ENCODE measurements at regions of chr2 and their contacts with region 1.

Region 1: DNA sequence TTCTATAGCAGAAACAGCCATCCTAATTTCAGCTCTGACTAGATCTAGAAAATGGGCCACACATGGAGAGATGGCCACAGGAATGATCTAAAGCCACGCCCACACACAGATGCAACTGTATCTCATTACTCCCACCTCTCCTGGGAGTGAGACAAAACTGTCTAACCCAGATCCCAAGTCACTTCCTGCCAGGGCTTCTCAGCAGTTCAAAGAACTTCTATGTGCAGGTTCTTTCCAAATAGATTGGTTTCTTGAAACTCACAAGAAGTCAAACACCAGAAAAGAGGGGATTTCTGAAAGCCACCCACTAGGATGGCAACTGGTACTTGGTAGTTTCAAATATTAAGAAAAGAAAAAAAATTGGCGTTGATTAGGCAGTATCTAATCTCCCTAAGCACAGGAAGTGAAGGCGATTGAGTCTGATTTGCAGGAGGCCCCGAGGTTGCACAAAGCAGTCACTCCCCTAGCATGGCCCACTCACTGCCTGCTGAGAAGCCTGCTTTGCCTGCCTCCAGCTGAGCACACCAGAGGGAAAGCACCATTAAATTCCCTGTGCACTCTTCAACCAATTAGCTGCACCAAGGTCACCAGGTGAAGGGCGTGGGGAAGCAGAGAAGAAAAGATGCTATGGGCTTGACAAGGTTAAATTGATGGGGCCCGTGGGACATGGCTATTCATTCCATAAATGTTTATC is 51.1 kb downstream of the PAPOLG start:
- DNase-seq: no peak
- H3K4me3 Mint-ChIP-seq: peak overlapping the region; percentile 32
- H3K27ac Mint-ChIP-seq: peak overlapping the region; percentile 83
- H3K4me1 Mint-ChIP-seq: peaks cover 46% of the 10 kb centered on the region
- H3K27me3 Mint-ChIP-seq: no peaks in the 10 kb centered on the region

Region 2: DNA sequence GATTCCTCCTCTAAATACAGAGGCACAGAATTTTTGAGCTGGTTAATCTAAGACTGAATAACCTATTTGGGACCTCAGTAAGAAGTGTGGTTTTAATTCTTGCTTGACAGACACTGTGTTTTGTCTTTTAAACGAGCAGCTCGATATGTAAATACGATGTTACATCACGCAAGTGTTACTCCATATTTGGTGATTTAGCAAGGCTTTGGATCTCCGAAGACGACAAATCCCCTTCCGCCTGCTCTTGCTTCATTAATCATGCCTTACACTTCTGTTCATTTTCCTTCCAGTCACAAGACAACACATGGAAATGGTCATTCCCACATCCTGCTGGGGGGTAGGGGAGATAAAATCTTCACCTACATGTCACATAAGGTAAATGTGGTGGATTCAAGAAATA is 263.1 kb before region 1 on chr2:
- intact Hi-C with region 1: no loop called
- DNase-seq: no peak
- H3K4me3 Mint-ChIP-seq: no peak overlapping the region
- H3K27ac Mint-ChIP-seq: no peak overlapping the region
- H3K4me1 Mint-ChIP-seq: peaks cover 6% of the 10 kb centered on the region
- H3K27me3 Mint-ChIP-seq: peaks cover 68% of the 10 kb centered on the region

Region 3: GRCh38 chr2:60775048-60775639 is 32.0 kb before region 1 on chr2:
- intact Hi-C with region 1: no loop called
- DNase-seq: no peak
- H3K4me3 Mint-ChIP-seq: no peak overlapping the region
- H3K27ac Mint-ChIP-seq: no peak overlapping the region
- H3K4me1 Mint-ChIP-seq: peaks cover under 1% of the 10 kb centered on the region
- H3K27me3 Mint-ChIP-seq: no peaks in the 10 kb centered on the region

Region 4: DNA sequence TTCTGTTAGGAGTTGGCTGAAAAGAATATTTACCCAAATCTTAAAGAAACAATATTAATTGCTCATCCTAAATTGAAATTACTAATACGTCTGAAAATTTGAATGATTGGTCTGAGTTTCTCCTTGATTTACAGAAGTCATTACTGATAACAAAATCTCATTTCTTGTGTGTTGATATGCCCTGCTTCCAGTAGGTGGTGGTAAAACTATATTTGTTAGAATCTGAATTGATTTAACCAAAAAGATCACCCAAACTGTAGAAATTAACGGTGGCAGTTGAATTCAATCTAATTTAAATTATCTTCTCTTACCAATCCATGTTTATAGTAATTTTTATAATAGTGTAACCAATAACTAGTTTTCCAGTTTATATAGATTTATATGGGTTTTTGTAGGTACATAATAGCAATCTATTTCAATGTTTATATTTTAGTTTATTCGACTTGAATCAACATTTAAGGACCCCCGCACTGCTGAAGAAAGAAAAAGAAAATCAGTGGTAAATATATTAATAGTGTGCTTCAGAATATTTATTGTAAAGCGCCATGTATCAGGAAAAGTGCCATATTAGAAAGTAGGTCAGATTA is 12.8 kb before region 1 on chr2:
- intact Hi-C with region 1: loop called (anchors 1 kb)
- DNase-seq: no peak
- H3K4me3 Mint-ChIP-seq: no peak overlapping the region
- H3K27ac Mint-ChIP-seq: no peak overlapping the region
- H3K4me1 Mint-ChIP-seq: peaks cover 16% of the 10 kb centered on the region
- H3K27me3 Mint-ChIP-seq: no peaks in the 10 kb centered on the region

Region 5: GRCh38 chr2:60852282-60852860 is 45.2 kb after region 1 on chr2:
- intact Hi-C with region 1: no loop called
- DNase-seq: no peak
- H3K4me3 Mint-ChIP-seq: no peak overlapping the region
- H3K27ac Mint-ChIP-seq: no peak overlapping the region
- H3K4me1 Mint-ChIP-seq: peaks cover 5% of the 10 kb centered on the region
- H3K27me3 Mint-ChIP-seq: peaks cover 2% of the 10 kb centered on the region

Region 6: DNA sequence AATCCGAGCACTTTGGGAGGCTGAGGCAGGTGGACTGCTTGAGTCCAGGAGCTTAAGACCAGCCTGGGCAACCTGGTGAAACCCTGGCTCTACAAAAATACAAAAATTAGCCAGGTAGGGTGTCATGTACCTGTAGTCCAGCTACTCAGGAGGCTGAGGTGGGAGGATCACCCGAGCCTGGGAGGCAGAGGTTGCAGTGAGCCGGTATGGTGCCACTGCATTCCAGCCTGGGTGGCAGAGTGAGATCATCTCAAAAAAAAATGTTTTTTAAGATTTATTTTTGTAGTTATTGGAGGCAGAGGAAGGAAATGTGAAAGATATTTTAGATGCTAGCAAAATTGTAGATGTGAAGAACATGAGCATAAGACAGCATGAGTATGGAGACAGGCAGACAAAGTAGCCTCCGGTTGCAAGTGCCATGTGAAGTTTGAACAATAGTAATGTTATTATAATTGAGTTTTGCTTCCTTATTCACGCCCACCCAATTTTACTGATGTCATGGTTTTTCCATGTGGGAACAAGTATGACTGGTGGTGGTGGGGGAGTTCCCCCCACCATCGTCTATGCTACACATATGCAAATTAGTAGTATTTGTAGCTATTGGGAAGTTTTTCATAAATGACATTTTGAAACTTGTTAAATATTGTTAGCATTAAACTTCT is 92.2 kb after region 1 on chr2:
- intact Hi-C with region 1: loop called (anchors 1 kb)
- DNase-seq: no peak
- H3K4me3 Mint-ChIP-seq: peak overlapping the region; percentile 54
- H3K27ac Mint-ChIP-seq: peak overlapping the region; percentile 95
- H3K4me1 Mint-ChIP-seq: peaks cover 35% of the 10 kb centered on the region
- H3K27me3 Mint-ChIP-seq: peaks cover 2% of the 10 kb centered on the region

Region 7: DNA sequence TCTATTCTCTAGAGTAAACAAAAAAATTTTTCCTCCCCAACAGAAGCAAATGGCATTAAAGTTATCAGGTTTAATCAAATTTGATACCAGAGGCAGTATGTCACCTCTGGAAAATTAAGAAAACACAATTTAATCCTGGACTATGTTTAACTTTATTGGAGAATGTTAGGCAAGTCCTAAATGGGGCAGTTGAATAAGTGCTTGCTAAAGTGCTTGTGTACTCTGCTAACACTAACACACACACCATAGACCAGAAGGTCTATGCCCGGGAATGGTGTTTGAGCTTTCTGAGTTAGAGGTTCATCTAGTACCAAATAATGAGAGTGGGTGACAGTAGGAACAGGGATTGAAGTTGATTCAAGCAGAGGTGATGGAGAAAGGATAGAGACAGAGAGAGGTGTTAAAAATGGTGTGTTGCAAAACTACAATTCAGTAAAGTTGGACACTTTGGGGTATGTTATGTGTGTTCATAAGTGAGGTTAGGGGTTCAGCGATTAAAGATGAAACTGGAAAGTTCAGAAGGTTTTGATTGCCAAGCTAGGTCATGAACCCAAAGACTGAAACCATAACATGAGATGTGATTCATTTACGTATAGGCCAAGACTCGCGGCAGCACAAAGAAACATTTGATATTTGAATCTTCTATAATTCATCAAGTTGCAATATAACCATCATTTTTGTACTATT is 169.9 kb after region 1 on chr2:
- intact Hi-C with region 1: loop called (anchors 1 kb)
- DNase-seq: no peak
- H3K4me3 Mint-ChIP-seq: no peak overlapping the region
- H3K27ac Mint-ChIP-seq: peak overlapping the region; percentile 38
- H3K4me1 Mint-ChIP-seq: peaks cover 29% of the 10 kb centered on the region
- H3K27me3 Mint-ChIP-seq: no peaks in the 10 kb centered on the region

Region 8: GRCh38 chr2:61065715-61066709 is 258.9 kb after region 1 on chr2 and contains the start of gene SANBR:
- intact Hi-C with region 1: loop called (anchors 5 kb)
- DNase-seq: peak; percentile 85
- H3K4me3 Mint-ChIP-seq: peak within 1 kb of the TSS; percentile 92
- H3K27ac Mint-ChIP-seq: peak within 1 kb of the TSS; percentile 87
- H3K4me1 Mint-ChIP-seq: peaks cover 16% of the 10 kb centered on the region
- H3K27me3 Mint-ChIP-seq: peaks cover 5% of the 10 kb centered on the region
- total RNA-seq, gene SANBR: 2.0 and 2.2 TPM in 2 replicates

Region 9: GRCh38 chr2:61272421-61273070 is 465.4 kb after region 1 on chr2:
- intact Hi-C with region 1: no loop called
- DNase-seq: no peak
- H3K4me3 Mint-ChIP-seq: no peak overlapping the region
- H3K27ac Mint-ChIP-seq: no peak overlapping the region
- H3K4me1 Mint-ChIP-seq: peaks cover 3% of the 10 kb centered on the region
- H3K27me3 Mint-ChIP-seq: no peaks in the 10 kb centered on the region

Measured in activated T-helper 1 cell treated with anti-CD3 and anti-CD28 coated beads, Interleukin-12 subunit alpha, Interleukin-12 subunit beta, Interleukin-2, Interleukin-4 antibody, amounts not matched to agents 30 ng/mL and 10 ng/mL and 1 ng/mL, durations not matched to agents 14 hours and 24 hours and 36 hours (primary cell).